GM12878 (cell line): ENCODE measurements at regions of chr2 and their contacts with region 1.

Region 1: DNA sequence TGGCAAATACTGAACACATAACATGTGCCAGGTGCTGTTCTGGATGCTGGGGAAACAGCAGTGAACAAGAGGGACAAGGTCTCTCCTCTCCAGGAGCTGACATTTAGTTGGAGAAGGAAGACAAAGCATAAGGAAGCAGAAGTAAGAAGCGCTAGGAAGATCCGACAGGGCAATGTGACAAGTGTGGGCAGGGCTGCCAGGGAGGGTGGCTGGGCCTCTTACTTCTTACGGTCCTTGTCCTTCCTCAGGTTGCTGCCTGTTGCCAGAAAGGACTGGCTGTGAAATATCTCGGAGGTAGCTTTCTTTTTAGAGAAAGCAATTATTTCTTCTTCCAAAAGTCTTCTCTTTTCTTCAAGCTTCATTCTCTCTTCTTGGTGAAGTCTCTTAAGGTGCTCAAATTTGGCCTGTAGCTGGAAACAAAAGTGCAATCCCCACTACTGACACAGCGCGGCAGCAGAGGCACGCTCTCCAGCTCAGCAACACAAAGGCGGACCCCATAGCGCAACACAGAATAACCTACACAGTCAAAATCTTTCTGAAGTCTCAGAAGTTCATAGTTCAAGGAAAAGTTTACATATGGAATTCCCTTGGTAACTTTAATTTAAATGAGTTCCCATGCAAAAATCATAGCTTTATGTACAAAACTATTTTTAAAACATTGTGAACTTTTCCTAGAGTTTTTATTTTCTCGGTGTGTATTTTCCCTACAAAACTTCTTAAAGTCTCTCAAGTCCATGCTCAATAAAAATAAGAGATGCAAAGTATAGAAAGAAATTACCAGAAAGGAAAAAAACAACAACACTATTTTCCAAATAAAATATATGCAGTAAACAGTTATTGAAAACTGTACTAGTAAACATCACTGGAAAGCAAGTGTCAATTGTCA is 67.7 kb downstream of the SEPTIN10 start:
- DNase-seq: peak; percentile 39
- ATAC-seq: peak; percentile 97
- H3K4me3 ChIP-seq: no peak overlapping the region
- H3K27ac ChIP-seq: no peak overlapping the region
- H3K4me1 ChIP-seq: no peaks in the 10 kb centered on the region; the same call in 1 of the 2 replicates
- H3K27me3 ChIP-seq: no peaks in the 10 kb centered on the region; a peak in 1 of 4 replicates
- CTCF ChIP-seq: peak; percentile 83 to 97 (median 95)
- EP300 ChIP-seq: no peak
- POLR2A ChIP-seq: no peak
- RAD21 ChIP-seq: peak; percentile 98

Region 2: DNA sequence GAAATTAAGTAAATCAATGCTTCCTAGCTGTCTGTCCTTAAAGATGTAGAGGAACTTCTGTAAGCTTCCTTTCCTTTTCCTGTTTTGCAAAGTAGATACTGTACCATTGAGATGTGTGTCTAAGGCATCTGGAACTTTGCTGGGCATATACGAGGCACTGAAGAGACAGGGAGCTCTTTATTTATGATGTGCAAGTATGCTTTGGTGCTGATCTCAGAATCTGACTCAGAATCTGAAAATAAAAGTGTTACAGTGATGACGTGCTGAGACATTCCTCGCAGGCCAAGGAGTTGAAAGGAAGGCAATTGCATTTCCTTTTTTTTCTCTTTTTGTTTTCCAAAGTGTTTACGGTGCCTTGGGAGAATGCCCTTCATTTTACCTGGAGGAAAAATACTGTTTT is 1950.3 kb before region 1 on chr2:
- CTCF ChIA-PET with region 1: no interaction called
- POLR2A ChIA-PET with region 1: no interaction called
- RAD21 ChIA-PET with region 1: no interaction called
- SMC1A ChIA-PET with region 1: no interaction called
- in situ Hi-C with region 1: no loop called
- intact Hi-C with region 1: no loop called
- DNase-seq: no peak
- ATAC-seq: no peak
- H3K4me3 ChIP-seq: no peak overlapping the region
- H3K27ac ChIP-seq: no peak overlapping the region
- H3K4me1 ChIP-seq: no peaks in the 10 kb centered on the region
- H3K27me3 ChIP-seq: no peaks in the 10 kb centered on the region
- CTCF ChIP-seq: no peak
- EP300 ChIP-seq: no peak
- POLR2A ChIP-seq: no peak
- RAD21 ChIP-seq: no peak

Region 3: GRCh38 chr2:109260886-109261700 is 285.0 kb before region 1 on chr2:
- CTCF ChIA-PET with region 1: no interaction called
- POLR2A ChIA-PET with region 1: no interaction called
- RAD21 ChIA-PET with region 1: no interaction called
- SMC1A ChIA-PET with region 1: no interaction called
- in situ Hi-C with region 1: no loop called
- intact Hi-C with region 1: no loop called
- DNase-seq: no peak
- ATAC-seq: peak; percentile 84
- H3K4me3 ChIP-seq: no peak overlapping the region
- H3K27ac ChIP-seq: no peak overlapping the region
- H3K4me1 ChIP-seq: peaks cover 4% of the 10 kb centered on the region
- H3K27me3 ChIP-seq: no peaks in the 10 kb centered on the region
- CTCF ChIP-seq: peak; percentile 29 to 31 (median 29); a peak in 4 of 6 replicates
- EP300 ChIP-seq: no peak
- POLR2A ChIP-seq: no peak
- RAD21 ChIP-seq: peak; percentile 53

Region 4: GRCh38 chr2:109516445-109517117 is 29.5 kb before region 1 on chr2:
- CTCF ChIA-PET with region 1: interaction called, 32 read pairs
- POLR2A ChIA-PET with region 1: interaction called, 5 read pairs
- RAD21 ChIA-PET with region 1: interaction called, 15 read pairs
- SMC1A ChIA-PET with region 1: interaction called, 12 read pairs
- in situ Hi-C with region 1: no loop called
- intact Hi-C with region 1: loop called (anchors 2 kb)
- DNase-seq: no peak
- ATAC-seq: peak; percentile 62
- H3K4me3 ChIP-seq: no peak overlapping the region
- H3K27ac ChIP-seq: no peak overlapping the region
- H3K4me1 ChIP-seq: peaks cover 29% of the 10 kb centered on the region
- H3K27me3 ChIP-seq: no peaks in the 10 kb centered on the region
- CTCF ChIP-seq: peak; percentile 74 to 89 (median 89)
- EP300 ChIP-seq: no peak
- POLR2A ChIP-seq: no peak
- RAD21 ChIP-seq: peak; percentile 80

Region 5: GRCh38 chr2:109558076-109558882 is 12.2 kb after region 1 on chr2:
- CTCF ChIA-PET with region 1: interaction called, 61 read pairs
- POLR2A ChIA-PET with region 1: no interaction called
- RAD21 ChIA-PET with region 1: interaction called, 7 read pairs
- SMC1A ChIA-PET with region 1: interaction called, 63 read pairs
- in situ Hi-C with region 1: no loop called
- intact Hi-C with region 1: no loop called
- DNase-seq: no peak
- ATAC-seq: no peak
- H3K4me3 ChIP-seq: no peak overlapping the region
- H3K27ac ChIP-seq: no peak overlapping the region
- H3K4me1 ChIP-seq: no peaks in the 10 kb centered on the region; the same call in 1 of the 2 replicates
- H3K27me3 ChIP-seq: no peaks in the 10 kb centered on the region
- CTCF ChIP-seq: no peak
- EP300 ChIP-seq: no peak
- POLR2A ChIP-seq: no peak
- RAD21 ChIP-seq: no peak

Region 6: GRCh38 chr2:109604597-109604996 is 58.5 kb after region 1 on chr2:
- CTCF ChIA-PET with region 1: interaction called, 139 read pairs
- POLR2A ChIA-PET with region 1: interaction called, 5 read pairs
- RAD21 ChIA-PET with region 1: interaction called, 110 read pairs
- SMC1A ChIA-PET with region 1: interaction called, 110 read pairs
- in situ Hi-C with region 1: no loop called
- intact Hi-C with region 1: no loop called
- DNase-seq: no peak
- ATAC-seq: no peak
- H3K4me3 ChIP-seq: no peak overlapping the region
- H3K27ac ChIP-seq: peak overlapping the region; percentile 20; the same call in 1 of the 2 replicates
- H3K4me1 ChIP-seq: peaks cover 10% of the 10 kb centered on the region
- H3K27me3 ChIP-seq: no peaks in the 10 kb centered on the region
- CTCF ChIP-seq: no peak
- EP300 ChIP-seq: no peak
- POLR2A ChIP-seq: no peak
- RAD21 ChIP-seq: no peak

Region 7: GRCh38 chr2:109644576-109645275 is 98.7 kb after region 1 on chr2:
- CTCF ChIA-PET with region 1: interaction called, 11 read pairs
- POLR2A ChIA-PET with region 1: no interaction called
- RAD21 ChIA-PET with region 1: interaction called, 3 read pairs
- SMC1A ChIA-PET with region 1: interaction called, 4 read pairs
- in situ Hi-C with region 1: no loop called
- intact Hi-C with region 1: no loop called
- DNase-seq: no peak
- ATAC-seq: peak; percentile 65
- H3K4me3 ChIP-seq: no peak overlapping the region
- H3K27ac ChIP-seq: no peak overlapping the region
- H3K4me1 ChIP-seq: peaks cover 14% of the 10 kb centered on the region
- H3K27me3 ChIP-seq: no peaks in the 10 kb centered on the region
- CTCF ChIP-seq: no peak
- EP300 ChIP-seq: no peak
- POLR2A ChIP-seq: no peak
- RAD21 ChIP-seq: no peak

Region 8: DNA sequence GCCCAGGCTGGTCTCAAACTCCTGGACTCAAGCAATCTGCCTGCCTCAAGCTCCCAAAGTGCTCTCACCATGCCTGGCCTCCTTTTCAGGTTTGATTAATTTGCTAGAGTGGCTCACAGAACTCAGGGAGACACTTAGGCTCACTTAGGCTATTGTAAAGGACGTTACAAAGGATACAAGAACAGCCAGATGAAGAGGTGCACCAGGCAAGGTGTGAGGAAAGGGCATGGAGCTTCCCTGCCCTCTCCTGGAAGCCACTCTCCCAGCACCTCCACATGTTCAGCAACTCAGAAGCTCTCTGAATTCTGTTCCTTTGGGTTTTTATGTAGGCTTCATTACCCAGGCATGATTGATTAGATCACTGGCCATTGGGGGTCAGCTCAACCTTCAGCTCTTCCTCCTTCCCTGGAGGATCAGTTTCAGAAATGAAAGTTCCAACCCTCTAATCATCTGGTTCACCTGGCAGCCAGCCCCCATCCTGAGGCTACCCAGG is 169.3 kb after region 1 on chr2:
- CTCF ChIA-PET with region 1: interaction called, 30 read pairs
- POLR2A ChIA-PET with region 1: no interaction called
- RAD21 ChIA-PET with region 1: interaction called, 10 read pairs
- SMC1A ChIA-PET with region 1: interaction called, 11 read pairs
- in situ Hi-C with region 1: no loop called
- intact Hi-C with region 1: loop called (anchors 10 kb)
- DNase-seq: no peak
- ATAC-seq: peak; percentile 46; the same call in 2 of the 3 replicates
- H3K4me3 ChIP-seq: no peak overlapping the region
- H3K27ac ChIP-seq: no peak overlapping the region
- H3K4me1 ChIP-seq: peaks cover 7% of the 10 kb centered on the region; the same call in 1 of the 2 replicates
- H3K27me3 ChIP-seq: no peaks in the 10 kb centered on the region
- CTCF ChIP-seq: peak; percentile 18 to 48 (median 34); a peak in 2 of 6 replicates
- EP300 ChIP-seq: no peak
- POLR2A ChIP-seq: no peak
- RAD21 ChIP-seq: peak; percentile 46